B cell (primary cell): ENCODE measurements at regions of chr10 and their contacts with region 1.

Region 1: DNA sequence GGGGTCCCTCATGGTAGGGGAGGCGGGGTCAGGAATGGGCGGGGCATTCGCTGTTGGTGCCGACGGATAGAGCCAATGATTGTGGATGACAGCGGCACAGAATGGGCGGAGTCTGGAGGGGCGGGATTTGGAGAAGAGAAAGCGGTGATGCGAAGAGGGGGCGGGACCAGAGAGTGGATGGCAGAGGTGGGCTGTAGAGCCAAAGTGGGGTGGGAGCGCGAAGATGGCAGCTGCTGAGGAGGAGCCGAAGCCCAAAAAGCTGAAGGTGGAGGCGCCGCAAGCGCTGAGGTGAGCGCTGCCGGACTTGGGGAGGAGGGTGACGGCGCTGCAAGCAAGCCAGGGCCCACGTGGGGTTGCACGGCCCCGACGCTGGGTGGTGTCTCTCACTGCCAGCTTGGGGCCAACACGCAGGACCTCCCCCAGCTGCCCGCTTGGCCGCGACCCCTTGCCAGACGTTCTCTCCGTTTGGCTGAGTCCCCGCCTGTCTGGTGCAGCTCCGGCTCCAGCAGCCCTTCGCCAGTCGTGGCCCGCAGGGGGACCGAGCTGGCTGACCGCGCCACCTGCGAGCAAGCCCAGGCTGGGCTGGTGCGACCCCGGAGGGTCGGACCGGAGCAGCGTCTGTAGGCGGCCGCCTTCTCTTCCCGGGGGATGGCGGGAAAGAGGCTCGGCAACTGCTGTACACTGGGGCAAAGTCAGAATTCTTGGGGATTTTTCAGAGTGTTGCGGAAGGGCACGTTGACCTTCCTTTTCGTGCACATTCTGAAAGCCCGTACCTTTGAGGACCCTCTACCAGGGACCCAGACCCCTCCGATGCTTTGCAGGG is at the start of gene ADK:
- DNase-seq: peak; percentile 100
- ATAC-seq: peak; percentile 95
- H3K4me3 ChIP-seq: peak within 1 kb of the TSS; percentile 87 to 98 (median 94)
- H3K4me3 Mint-ChIP-seq: no peak within 1 kb of the TSS
- H3K27ac ChIP-seq: peak within 1 kb of the TSS; percentile 93 to 97
- H3K27ac Mint-ChIP-seq: no peak within 1 kb of the TSS
- H3K4me1 ChIP-seq: peaks cover 41 to 61% of the 10 kb centered on the region in 2 donors
- H3K4me1 Mint-ChIP-seq: peaks cover 55% of the 10 kb centered on the region
- H3K27me3 ChIP-seq: no peaks in the 10 kb centered on the region
- H3K27me3 Mint-ChIP-seq: no peaks in the 10 kb centered on the region
- CTCF ChIP-seq: peak; percentile 39
- total RNA-seq, gene ADK: 52.6 and 53.8 TPM in 2 replicates

Region 2: DNA sequence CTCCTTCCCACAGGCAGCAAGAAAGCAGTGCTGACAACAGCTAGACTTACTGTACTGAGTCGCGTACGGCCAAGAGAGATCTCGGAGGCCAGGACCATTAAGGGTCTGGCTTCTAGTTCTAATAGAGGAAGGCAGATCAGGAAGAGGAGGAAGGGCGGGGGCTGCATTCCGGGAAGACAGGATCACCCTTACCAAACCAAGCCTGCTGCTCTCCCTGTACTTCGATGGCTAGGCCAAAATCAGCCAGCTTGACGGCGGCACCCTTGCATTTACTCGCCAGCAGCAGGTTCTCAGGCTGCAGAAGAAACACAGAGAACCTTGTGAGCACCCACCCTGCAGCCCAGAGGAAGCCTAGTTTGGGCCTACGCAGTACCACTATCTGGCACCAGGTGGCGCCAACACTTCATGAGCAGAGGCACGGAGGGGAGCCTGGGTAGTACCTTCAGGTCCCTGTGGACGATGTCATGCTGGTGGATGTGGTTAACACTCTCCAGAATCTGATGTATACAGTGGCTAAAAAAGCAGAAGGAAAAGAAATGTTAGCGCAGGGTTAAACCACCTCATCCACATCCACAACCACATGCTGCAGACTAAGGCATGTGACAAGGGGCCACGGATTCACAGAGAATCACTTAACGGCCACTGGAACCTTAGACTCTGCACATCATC is 302.3 kb before region 1 on chr10:
- CTCF ChIA-PET with region 1: no interaction called
- POLR2A ChIA-PET with region 1: no interaction called
- intact Hi-C with region 1: loop called (anchors 1 kb)
- DNase-seq: peak; percentile 96
- ATAC-seq: peak; percentile 100
- H3K4me3 ChIP-seq: no peak overlapping the region
- H3K4me3 Mint-ChIP-seq: peak overlapping the region; percentile 12
- H3K27ac ChIP-seq: peak overlapping the region; percentile 51 to 71
- H3K27ac Mint-ChIP-seq: peak overlapping the region; percentile 47
- H3K4me1 ChIP-seq: peaks cover 7 to 17% of the 10 kb centered on the region in 2 donors
- H3K4me1 Mint-ChIP-seq: peaks cover 13% of the 10 kb centered on the region
- H3K27me3 ChIP-seq: no peaks in the 10 kb centered on the region
- H3K27me3 Mint-ChIP-seq: no peaks in the 10 kb centered on the region
- CTCF ChIP-seq: peak; percentile 99

Region 3: GRCh38 chr10:74165530-74165901 is 14.2 kb after region 1 on chr10:
- CTCF ChIA-PET with region 1: interaction called, 17 read pairs
- POLR2A ChIA-PET with region 1: interaction called, 11 read pairs
- intact Hi-C with region 1: loop called (anchors 1 kb)
- DNase-seq: no peak
- ATAC-seq: no peak
- H3K4me3 ChIP-seq: no peak overlapping the region
- H3K4me3 Mint-ChIP-seq: peak overlapping the region; percentile 35
- H3K27ac ChIP-seq: peak overlapping the region; percentile 23 to 80
- H3K27ac Mint-ChIP-seq: peak overlapping the region; percentile 66
- H3K4me1 ChIP-seq: peaks cover 73 to 81% of the 10 kb centered on the region in 2 donors
- H3K4me1 Mint-ChIP-seq: peaks cover 70% of the 10 kb centered on the region
- H3K27me3 ChIP-seq: no peaks in the 10 kb centered on the region
- H3K27me3 Mint-ChIP-seq: no peaks in the 10 kb centered on the region
- CTCF ChIP-seq: no peak

Region 4: DNA sequence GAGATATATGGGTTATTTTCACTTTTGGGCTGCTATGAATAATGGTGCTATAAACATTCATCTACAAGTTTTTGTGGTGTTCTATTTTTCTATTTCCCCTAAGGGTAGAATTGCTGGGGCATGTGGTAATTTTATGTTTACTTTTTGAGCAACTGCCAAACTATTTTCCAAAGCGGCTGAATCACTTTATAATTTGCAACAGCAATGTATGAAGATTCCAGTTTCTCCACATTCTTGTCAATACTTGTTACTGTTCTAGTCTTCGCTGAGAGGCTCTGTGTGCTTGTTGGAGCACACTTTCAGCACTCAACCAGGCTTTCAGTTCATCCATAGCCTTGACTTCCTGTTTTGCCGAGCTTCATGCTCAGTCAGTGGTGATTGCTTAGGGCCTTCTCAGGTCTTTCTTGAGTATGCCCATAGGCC is 38.7 kb after region 1 on chr10:
- CTCF ChIA-PET with region 1: interaction called, 13 read pairs
- POLR2A ChIA-PET with region 1: interaction called, 6 read pairs
- intact Hi-C with region 1: loop called (anchors 1 kb)
- DNase-seq: peak; percentile 69
- ATAC-seq: peak; percentile 96
- H3K4me3 ChIP-seq: peak overlapping the region in 3 of 5 experiments; percentile 9 to 25 (median 15)
- H3K4me3 Mint-ChIP-seq: peak overlapping the region; percentile 77
- H3K27ac ChIP-seq: peak overlapping the region; percentile 68 to 80
- H3K27ac Mint-ChIP-seq: peak overlapping the region; percentile 95
- H3K4me1 ChIP-seq: peaks cover 30 to 57% of the 10 kb centered on the region in 2 donors
- H3K4me1 Mint-ChIP-seq: peaks cover 74% of the 10 kb centered on the region
- H3K27me3 ChIP-seq: no peaks in the 10 kb centered on the region
- H3K27me3 Mint-ChIP-seq: no peaks in the 10 kb centered on the region
- CTCF ChIP-seq: no peak

Region 5: DNA sequence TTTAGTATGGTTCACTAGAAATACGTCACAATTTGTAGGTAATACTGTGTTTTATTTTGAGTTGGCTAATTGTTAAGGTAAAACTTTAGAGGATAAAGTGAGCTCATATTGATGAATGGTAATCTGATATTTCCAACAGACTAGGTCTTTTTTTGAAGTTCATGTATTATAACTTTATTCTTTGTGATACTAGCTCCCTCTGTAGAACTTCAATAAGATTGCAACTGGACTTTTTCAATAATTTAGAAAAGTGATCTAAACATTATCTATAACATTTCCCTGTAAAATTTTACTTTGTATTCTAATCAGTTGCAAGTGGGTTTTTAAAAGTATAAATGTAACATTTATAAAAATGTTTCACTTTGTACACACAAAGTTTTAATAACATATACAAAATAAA is 83.3 kb after region 1 on chr10:
- CTCF ChIA-PET with region 1: interaction called, 20 read pairs
- POLR2A ChIA-PET with region 1: no interaction called
- intact Hi-C with region 1: loop called (anchors 1 kb)
- DNase-seq: no peak
- ATAC-seq: no peak
- H3K4me3 ChIP-seq: no peak overlapping the region
- H3K4me3 Mint-ChIP-seq: no peak overlapping the region
- H3K27ac ChIP-seq: peak overlapping the region in 1 of 2 donors; percentile 12
- H3K27ac Mint-ChIP-seq: no peak overlapping the region
- H3K4me1 ChIP-seq: peaks cover 0 to 2% of the 10 kb centered on the region in 2 donors
- H3K4me1 Mint-ChIP-seq: peaks cover 18% of the 10 kb centered on the region
- H3K27me3 ChIP-seq: no peaks in the 10 kb centered on the region
- H3K27me3 Mint-ChIP-seq: no peaks in the 10 kb centered on the region
- CTCF ChIP-seq: peak; percentile 63

Region 6: DNA sequence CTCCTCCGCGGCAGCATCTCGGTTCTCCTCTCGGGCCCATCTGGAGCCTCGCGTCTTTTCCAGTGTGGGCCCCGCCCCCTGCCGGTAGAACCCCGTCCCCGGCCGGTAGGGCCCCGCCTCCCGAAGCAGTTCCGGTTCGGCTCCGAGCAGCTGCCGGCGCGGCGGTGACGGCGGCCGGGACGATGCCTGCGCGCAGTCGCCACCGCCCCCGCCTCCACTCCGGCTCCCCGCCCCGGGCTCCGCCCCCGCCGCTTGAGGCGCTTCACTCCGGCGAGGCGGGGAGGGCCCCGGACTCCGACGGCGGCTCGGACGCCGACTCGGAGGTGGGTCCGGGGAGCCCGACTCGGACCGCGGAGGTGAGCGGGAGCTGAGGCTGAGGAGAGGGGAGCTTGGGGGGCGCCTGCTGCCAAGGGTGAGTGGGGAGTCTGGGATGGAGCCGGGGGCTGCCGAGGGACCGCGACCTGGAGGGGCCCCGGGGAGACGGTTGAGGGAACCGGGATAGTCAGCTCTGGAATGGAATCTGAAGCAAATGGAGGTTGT is 960.2 kb after region 1 on chr10 and contains the start of gene SAMD8:
- CTCF ChIA-PET with region 1: no interaction called
- POLR2A ChIA-PET with region 1: no interaction called
- intact Hi-C with region 1: loop called (anchors 5 kb)
- DNase-seq: peak; percentile 98
- ATAC-seq: peak; percentile 84
- H3K4me3 ChIP-seq: peak within 1 kb of the TSS; percentile 73 to 100 (median 91)
- H3K4me3 Mint-ChIP-seq: peak within 1 kb of the TSS; percentile 89
- H3K27ac ChIP-seq: peak within 1 kb of the TSS; percentile 98
- H3K27ac Mint-ChIP-seq: peak within 1 kb of the TSS; percentile 90
- H3K4me1 ChIP-seq: peaks cover 18 to 24% of the 10 kb centered on the region in 2 donors
- H3K4me1 Mint-ChIP-seq: peaks cover 44% of the 10 kb centered on the region
- H3K27me3 ChIP-seq: no peaks in the 10 kb centered on the region
- H3K27me3 Mint-ChIP-seq: no peaks in the 10 kb centered on the region
- CTCF ChIP-seq: peak; percentile 34
- total RNA-seq, gene SAMD8: 31.7 and 35.7 TPM in 2 replicates

Region 7: DNA sequence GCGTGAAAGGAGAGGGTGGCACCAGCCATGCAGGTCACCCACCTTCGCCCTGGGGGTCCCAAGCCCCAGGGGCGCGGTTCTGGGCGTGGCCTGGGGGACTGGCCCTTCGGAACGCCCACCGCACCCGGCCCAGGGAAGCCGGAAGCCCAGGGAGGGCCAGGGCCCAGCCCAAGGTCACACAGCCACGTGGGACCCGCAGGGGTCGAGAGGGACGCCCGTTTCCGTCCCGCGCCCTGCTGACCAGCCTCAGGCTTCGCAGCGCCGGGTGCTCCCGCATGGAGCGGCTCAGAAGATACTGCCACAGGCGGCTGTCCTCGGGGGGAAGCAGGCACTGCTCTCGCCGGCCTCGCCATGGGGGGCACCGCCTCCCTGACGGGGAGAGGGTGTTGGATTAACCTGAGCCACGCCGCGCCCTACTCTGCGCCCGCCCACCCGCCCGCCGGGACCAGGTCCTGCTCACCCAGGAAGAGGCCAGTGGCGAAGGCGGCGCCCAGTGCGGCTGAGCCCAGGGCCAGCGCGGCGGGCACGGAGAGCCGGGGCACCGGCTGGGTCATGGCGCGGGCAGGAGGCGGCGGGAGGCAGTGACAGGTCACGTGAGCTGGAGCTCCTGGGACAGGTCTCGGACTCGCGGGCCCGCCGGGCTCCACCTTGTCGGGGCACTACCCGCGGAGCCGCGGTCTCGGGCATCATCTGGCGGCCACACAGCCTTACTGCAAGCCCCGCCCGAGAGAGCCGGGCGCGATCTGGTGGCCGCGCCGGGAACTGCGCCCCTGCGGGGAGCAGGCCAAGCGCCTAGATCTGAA is 1084.3 kb after region 1 on chr10 and contains the start of gene COMTD1:
- CTCF ChIA-PET with region 1: interaction called, 3 read pairs
- POLR2A ChIA-PET with region 1: no interaction called
- intact Hi-C with region 1: loop called (anchors 2 kb)
- DNase-seq: peak; percentile 94
- ATAC-seq: peak; percentile 70
- H3K4me3 ChIP-seq: peak within 1 kb of the TSS; percentile 17 to 80 (median 71)
- H3K4me3 Mint-ChIP-seq: peak within 1 kb of the TSS; percentile 85
- H3K27ac ChIP-seq: peak within 1 kb of the TSS; percentile 2 to 57
- H3K27ac Mint-ChIP-seq: peak within 1 kb of the TSS; percentile 74
- H3K4me1 ChIP-seq: peaks cover 4 to 20% of the 10 kb centered on the region in 2 donors
- H3K4me1 Mint-ChIP-seq: peaks cover 18% of the 10 kb centered on the region
- H3K27me3 ChIP-seq: no peaks in the 10 kb centered on the region
- H3K27me3 Mint-ChIP-seq: no peaks in the 10 kb centered on the region
- CTCF ChIP-seq: peak; percentile 100
- total RNA-seq, gene COMTD1: 12.3 and 14.5 TPM in 2 replicates